Activated CD4-positive, alpha-beta T cell treated with anti-CD3 and anti-CD28 coated beads for 36 hours (primary cell): ENCODE measurements at regions of chr7 and their contacts with region 1.

Region 1: GRCh38 chr7:113456533-113456932 is 338.2 kb upstream of the SMIM30 start:
- DNase-seq: no peak
- ATAC-seq: no peak
- H3K4me3 Mint-ChIP-seq: no peak overlapping the region
- H3K27ac Mint-ChIP-seq: no peak overlapping the region
- H3K4me1 Mint-ChIP-seq: no peaks in the 10 kb centered on the region
- H3K27me3 Mint-ChIP-seq: no peaks in the 10 kb centered on the region

Region 2: DNA sequence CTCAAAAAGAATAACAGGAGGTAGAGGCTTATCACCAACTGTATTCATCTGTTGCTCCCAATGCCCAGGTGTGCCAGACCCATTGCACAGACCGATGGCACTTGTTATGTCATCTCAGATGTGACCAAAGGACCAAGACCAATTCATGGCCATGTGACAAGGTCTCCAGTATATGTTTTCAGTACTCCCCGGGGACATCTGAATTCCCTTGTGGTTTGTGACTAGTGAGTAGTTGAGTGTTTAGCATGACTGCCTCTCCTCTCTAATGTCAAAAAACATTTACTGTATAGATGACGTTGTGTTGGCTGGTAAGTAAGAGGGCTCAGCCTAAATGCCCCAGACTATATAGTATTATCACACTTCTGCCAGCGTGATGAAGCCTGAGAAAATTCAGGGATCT is 136.1 kb before region 1 on chr7:
- CTCF ChIA-PET with region 1: no interaction called
- POLR2A ChIA-PET with region 1: interaction called, 12 read pairs
- intact Hi-C with region 1: no loop called
- DNase-seq: no peak
- ATAC-seq: no peak
- H3K4me3 Mint-ChIP-seq: no peak overlapping the region
- H3K27ac Mint-ChIP-seq: no peak overlapping the region
- H3K4me1 Mint-ChIP-seq: no peaks in the 10 kb centered on the region
- H3K27me3 Mint-ChIP-seq: no peaks in the 10 kb centered on the region

Region 3: GRCh38 chr7:113698556-113699220 is 242.2 kb after region 1 on chr7:
- CTCF ChIA-PET with region 1: no interaction called
- POLR2A ChIA-PET with region 1: no interaction called
- intact Hi-C with region 1: no loop called
- DNase-seq: no peak
- ATAC-seq: no peak
- H3K4me3 Mint-ChIP-seq: no peak overlapping the region
- H3K27ac Mint-ChIP-seq: no peak overlapping the region
- H3K4me1 Mint-ChIP-seq: no peaks in the 10 kb centered on the region
- H3K27me3 Mint-ChIP-seq: no peaks in the 10 kb centered on the region

Region 4: DNA sequence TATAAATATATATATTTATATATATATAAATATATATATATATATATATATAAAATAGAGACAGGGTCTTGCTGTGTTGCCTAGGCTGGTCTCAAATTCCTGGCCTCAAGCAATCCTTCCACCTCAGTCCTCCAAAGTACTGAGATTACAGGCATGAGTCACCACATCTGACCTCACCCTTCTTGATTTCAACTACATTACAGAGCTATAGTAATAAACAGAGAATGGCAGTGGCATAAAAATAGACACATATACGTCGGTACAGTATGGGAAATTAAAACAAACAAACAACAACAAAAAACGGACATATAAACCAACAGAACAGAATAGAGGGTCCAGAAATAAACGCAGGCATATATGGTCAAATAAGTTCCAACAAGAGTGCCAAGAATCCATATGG is 539.9 kb after region 1 on chr7:
- CTCF ChIA-PET with region 1: no interaction called
- POLR2A ChIA-PET with region 1: no interaction called
- intact Hi-C with region 1: no loop called
- DNase-seq: no peak
- ATAC-seq: no peak
- H3K4me3 Mint-ChIP-seq: no peak overlapping the region
- H3K27ac Mint-ChIP-seq: no peak overlapping the region
- H3K4me1 Mint-ChIP-seq: no peaks in the 10 kb centered on the region
- H3K27me3 Mint-ChIP-seq: no peaks in the 10 kb centered on the region